CD8-positive, alpha-beta T cell (primary cell): ENCODE measurements at regions of chr6 and their contacts with region 1.

Region 1: DNA sequence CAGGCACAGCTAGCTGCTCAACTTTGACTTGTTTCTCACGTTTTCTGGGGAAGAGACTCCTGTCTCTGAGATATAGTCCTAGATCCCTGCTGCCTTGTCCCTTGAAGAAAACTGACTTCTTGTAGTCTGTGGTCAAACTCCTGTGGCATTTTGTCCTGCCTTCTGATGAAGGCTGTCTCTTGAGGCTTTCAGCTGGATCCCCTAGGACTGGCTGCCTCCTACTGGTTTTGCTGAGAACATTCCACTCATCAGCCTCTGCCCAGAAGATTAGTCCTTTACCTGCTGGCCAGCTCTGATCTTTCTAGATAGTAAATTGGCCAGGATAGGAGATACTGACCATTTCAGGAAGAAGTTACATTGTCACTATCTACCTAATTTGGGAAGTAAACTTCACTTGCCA is 71.9 kb upstream of the CNR1 start:
- DNase-seq: peak in 2 of 9 experiments; percentile 23 to 41
- ATAC-seq: no peak
- H3K4me3 ChIP-seq: no peak overlapping the region
- H3K4me3 Mint-ChIP-seq: no peak overlapping the region
- H3K27ac ChIP-seq: no peak overlapping the region
- H3K27ac Mint-ChIP-seq: no peak overlapping the region
- H3K4me1 ChIP-seq: no peaks in the 10 kb centered on the region
- H3K4me1 Mint-ChIP-seq: no peaks in the 10 kb centered on the region
- H3K27me3 ChIP-seq: no peaks in the 10 kb centered on the region
- H3K27me3 Mint-ChIP-seq: peaks cover 2% of the 10 kb centered on the region
- CTCF ChIP-seq: no peak

Region 2: DNA sequence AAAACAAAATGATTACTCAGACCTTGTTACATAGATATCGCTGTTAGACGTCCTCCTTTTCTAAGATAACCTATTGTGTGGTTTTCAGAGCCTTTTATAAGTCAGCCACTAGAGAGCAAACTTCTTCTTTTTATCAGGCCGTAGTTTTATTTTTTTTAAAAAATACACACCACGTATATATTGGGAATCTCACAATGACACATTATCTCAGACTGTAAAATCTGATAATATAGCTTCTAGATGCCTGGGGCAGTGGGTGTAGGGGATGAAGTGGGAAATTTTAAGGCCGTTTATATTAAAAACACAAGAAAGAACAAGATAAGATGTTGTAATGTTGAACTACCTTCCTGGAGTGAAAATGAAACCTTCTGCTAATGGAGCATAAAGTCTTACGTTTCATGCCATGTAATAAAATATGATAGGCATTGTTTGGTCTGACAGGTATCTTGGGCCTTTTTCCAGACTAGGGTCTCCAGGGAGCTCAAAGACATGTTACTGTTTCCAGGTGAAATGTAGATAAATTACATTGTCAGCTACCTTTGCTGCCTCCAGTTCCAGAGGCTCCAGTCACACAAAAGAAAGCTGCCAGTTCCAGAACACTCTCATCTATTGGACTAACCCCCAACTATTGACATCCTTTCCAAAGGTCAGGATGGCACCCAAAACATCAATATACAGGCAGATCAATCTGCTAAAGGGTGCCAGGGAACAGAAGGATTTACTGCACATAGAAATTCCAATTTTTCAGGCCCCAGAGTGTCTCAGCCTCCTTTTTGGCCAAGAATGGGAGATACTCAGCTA is 405.8 kb before region 1 on chr6:
- CTCF ChIA-PET with region 1: no interaction called
- POLR2A ChIA-PET with region 1: no interaction called
- intact Hi-C with region 1: loop called in 1 of 2 experiments (anchors 10 kb)
- DNase-seq: peak in 2 of 9 experiments; percentile 30 to 53
- ATAC-seq: peak; percentile 55
- H3K4me3 ChIP-seq: peak overlapping the region; percentile 34 to 52
- H3K4me3 Mint-ChIP-seq: peak overlapping the region; percentile 91
- H3K27ac ChIP-seq: peak overlapping the region; percentile 31 to 53
- H3K27ac Mint-ChIP-seq: peak overlapping the region; percentile 88
- H3K4me1 ChIP-seq: peaks cover 4% of the 10 kb centered on the region
- H3K4me1 Mint-ChIP-seq: peaks cover 8% of the 10 kb centered on the region
- H3K27me3 ChIP-seq: no peaks in the 10 kb centered on the region
- H3K27me3 Mint-ChIP-seq: peaks cover 2% of the 10 kb centered on the region
- CTCF ChIP-seq: no peak

Region 3: GRCh38 chr6:87929843-87930288 is 308.2 kb before region 1 on chr6:
- CTCF ChIA-PET with region 1: no interaction called
- POLR2A ChIA-PET with region 1: no interaction called
- intact Hi-C with region 1: loop called in 1 of 2 experiments (anchors 5 kb)
- DNase-seq: peak; percentile 13 to 66 (median 44)
- ATAC-seq: peak; percentile 66
- H3K4me3 ChIP-seq: no peak overlapping the region
- H3K4me3 Mint-ChIP-seq: no peak overlapping the region
- H3K27ac ChIP-seq: no peak overlapping the region
- H3K27ac Mint-ChIP-seq: no peak overlapping the region
- H3K4me1 ChIP-seq: no peaks in the 10 kb centered on the region
- H3K4me1 Mint-ChIP-seq: peaks cover 6% of the 10 kb centered on the region
- H3K27me3 ChIP-seq: no peaks in the 10 kb centered on the region
- H3K27me3 Mint-ChIP-seq: no peaks in the 10 kb centered on the region
- CTCF ChIP-seq: peak; percentile 52

Region 4: GRCh38 chr6:88072462-88072861 is 165.6 kb before region 1 on chr6:
- CTCF ChIA-PET with region 1: no interaction called
- POLR2A ChIA-PET with region 1: no interaction called
- intact Hi-C with region 1: no loop called
- DNase-seq: no peak
- ATAC-seq: no peak
- H3K4me3 ChIP-seq: no peak overlapping the region
- H3K4me3 Mint-ChIP-seq: no peak overlapping the region
- H3K27ac ChIP-seq: no peak overlapping the region
- H3K27ac Mint-ChIP-seq: no peak overlapping the region
- H3K4me1 ChIP-seq: no peaks in the 10 kb centered on the region
- H3K4me1 Mint-ChIP-seq: no peaks in the 10 kb centered on the region
- H3K27me3 ChIP-seq: no peaks in the 10 kb centered on the region
- H3K27me3 Mint-ChIP-seq: peaks cover 24% of the 10 kb centered on the region
- CTCF ChIP-seq: no peak

Region 5: DNA sequence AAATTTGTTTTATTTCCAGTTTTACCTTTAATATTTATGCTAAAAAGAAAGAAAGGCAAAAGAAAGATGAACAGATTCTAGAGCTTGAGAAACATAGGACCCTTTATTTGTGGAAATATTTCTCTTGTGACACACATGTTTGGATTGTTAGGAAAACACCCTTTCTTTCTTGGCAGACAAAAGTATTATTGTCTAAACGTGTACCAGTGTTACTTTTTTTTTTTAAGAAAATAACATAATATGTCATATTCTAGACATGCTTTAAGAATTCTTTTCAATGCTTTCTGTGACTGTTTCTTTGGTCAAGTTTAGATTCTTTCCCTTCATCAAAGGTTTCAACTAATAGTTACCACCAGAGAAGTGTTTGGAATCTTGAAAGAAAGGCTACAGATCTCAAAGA is 111.4 kb after region 1 on chr6:
- CTCF ChIA-PET with region 1: no interaction called
- POLR2A ChIA-PET with region 1: no interaction called
- intact Hi-C with region 1: no loop called
- DNase-seq: no peak
- ATAC-seq: no peak
- H3K4me3 ChIP-seq: no peak overlapping the region
- H3K4me3 Mint-ChIP-seq: no peak overlapping the region
- H3K27ac ChIP-seq: no peak overlapping the region
- H3K27ac Mint-ChIP-seq: no peak overlapping the region
- H3K4me1 ChIP-seq: no peaks in the 10 kb centered on the region
- H3K4me1 Mint-ChIP-seq: no peaks in the 10 kb centered on the region
- H3K27me3 ChIP-seq: no peaks in the 10 kb centered on the region
- H3K27me3 Mint-ChIP-seq: peaks cover 2% of the 10 kb centered on the region
- CTCF ChIP-seq: no peak

Region 6: DNA sequence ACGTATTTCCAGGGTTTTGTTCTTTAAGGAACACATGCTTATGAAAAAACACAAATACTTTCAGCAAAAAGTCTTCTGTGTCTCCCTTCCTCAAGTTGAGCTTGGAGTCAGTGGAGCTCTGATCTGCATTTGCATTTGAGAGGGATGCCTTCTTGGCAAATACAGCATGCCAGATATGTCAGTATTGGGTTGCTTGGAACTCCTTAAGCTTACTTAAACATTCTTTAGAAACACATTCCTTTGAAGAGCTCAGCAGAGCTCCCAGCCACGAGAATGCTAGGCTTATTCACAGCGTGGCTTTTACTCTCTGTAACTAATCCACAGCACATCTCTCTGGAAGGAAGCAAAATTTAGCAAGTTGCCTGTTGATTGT is 1263.2 kb after region 1 on chr6:
- CTCF ChIA-PET with region 1: no interaction called
- POLR2A ChIA-PET with region 1: no interaction called
- intact Hi-C with region 1: no loop called
- DNase-seq: no peak
- ATAC-seq: no peak
- H3K4me3 ChIP-seq: no peak overlapping the region
- H3K4me3 Mint-ChIP-seq: no peak overlapping the region
- H3K27ac ChIP-seq: no peak overlapping the region
- H3K27ac Mint-ChIP-seq: no peak overlapping the region
- H3K4me1 ChIP-seq: no peaks in the 10 kb centered on the region
- H3K4me1 Mint-ChIP-seq: no peaks in the 10 kb centered on the region
- H3K27me3 ChIP-seq: no peaks in the 10 kb centered on the region
- H3K27me3 Mint-ChIP-seq: no peaks in the 10 kb centered on the region
- CTCF ChIP-seq: no peak